Activated naive CD4-positive, alpha-beta T cell treated with anti-CD3 and anti-CD28 coated beads for 36 hours (primary cell): ENCODE measurements at regions of chrX and their contacts with region 1.

Region 1: GRCh38 chrX:103918581-103919269 is 43.7 kb upstream of the TMSB15B start:
- DNase-seq: peak; percentile 73
- H3K4me3 Mint-ChIP-seq: peak overlapping the region; percentile 86
- H3K27ac Mint-ChIP-seq: peak overlapping the region; percentile 90
- H3K4me1 Mint-ChIP-seq: peaks cover 12% of the 10 kb centered on the region
- H3K27me3 Mint-ChIP-seq: no peaks in the 10 kb centered on the region

Region 2: GRCh38 chrX:103629318-103630170 is 289.2 kb before region 1 on chrX:
- CTCF ChIA-PET with region 1: no interaction called
- intact Hi-C with region 1: loop called (anchors 2 kb)
- DNase-seq: peak; percentile 33
- H3K4me3 Mint-ChIP-seq: peak overlapping the region; percentile 87
- H3K27ac Mint-ChIP-seq: peak overlapping the region; percentile 87
- H3K4me1 Mint-ChIP-seq: peaks cover 19% of the 10 kb centered on the region
- H3K27me3 Mint-ChIP-seq: no peaks in the 10 kb centered on the region

Region 3: DNA sequence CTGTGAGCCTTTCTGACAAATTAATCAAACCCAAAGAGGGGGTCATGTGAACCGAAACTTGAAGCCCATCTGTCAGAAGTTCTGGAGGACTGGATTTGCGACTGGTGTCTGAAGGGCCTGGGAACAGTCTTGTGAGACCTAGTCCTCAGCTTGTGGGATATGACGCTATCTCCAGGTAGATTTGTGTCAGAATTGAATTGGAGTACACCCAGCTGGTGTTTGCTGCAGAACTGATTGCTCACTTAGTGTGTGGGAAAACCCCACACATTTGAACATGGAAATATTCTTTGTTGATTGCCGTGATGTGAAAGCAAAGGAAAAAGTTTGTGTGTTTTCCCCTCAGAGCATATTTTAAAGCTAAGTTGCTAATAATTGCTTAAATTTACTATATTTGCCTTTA is 13.4 kb after region 1 on chrX:
- CTCF ChIA-PET with region 1: interaction called, 15 read pairs
- intact Hi-C with region 1: loop called (anchors 1 kb)
- DNase-seq: peak; percentile 9
- H3K4me3 Mint-ChIP-seq: no peak overlapping the region
- H3K27ac Mint-ChIP-seq: no peak overlapping the region
- H3K4me1 Mint-ChIP-seq: peaks cover 8% of the 10 kb centered on the region
- H3K27me3 Mint-ChIP-seq: no peaks in the 10 kb centered on the region

Region 4: DNA sequence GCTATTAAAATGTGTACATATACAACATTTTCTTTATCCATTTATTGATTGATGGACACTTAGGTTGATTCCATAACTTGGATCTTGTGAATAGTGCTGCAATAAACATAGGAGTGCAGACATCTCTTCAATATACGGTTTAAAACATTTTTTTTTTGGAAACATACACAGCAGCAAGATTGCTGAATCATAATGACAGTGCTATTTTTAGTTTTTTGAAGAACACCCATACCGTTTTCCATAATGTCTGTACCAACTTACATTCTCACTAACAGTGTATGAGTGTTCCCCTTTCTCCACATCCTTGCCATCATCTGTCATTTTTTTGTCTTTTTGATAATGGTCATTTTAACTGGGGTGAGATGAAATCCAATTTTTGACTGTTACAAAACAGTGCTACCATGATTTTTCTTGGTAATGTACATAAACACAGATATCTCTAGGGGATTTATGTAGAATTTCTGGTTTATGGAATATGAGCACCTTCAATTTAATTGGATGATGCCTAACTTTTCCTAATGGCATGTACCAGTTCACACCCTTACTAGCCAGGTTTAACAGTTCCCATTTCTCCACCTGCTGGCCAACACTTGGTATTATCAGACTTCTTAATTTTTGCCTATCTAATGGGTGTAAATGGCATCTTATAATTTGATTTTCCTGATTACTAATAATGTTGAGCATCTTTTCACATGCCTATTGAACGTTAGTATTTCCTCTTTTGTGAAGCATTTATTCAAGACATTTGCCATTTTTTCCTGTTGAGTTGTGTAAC is 22.7 kb after region 1 on chrX:
- CTCF ChIA-PET with region 1: interaction called, 8 read pairs
- intact Hi-C with region 1: loop called (anchors 1 kb)
- DNase-seq: peak; percentile 5
- H3K4me3 Mint-ChIP-seq: no peak overlapping the region
- H3K27ac Mint-ChIP-seq: no peak overlapping the region
- H3K4me1 Mint-ChIP-seq: peaks cover 34% of the 10 kb centered on the region
- H3K27me3 Mint-ChIP-seq: no peaks in the 10 kb centered on the region

Region 5: GRCh38 chrX:104113222-104113965 is 194.7 kb after region 1 on chrX:
- CTCF ChIA-PET with region 1: no interaction called
- intact Hi-C with region 1: loop called (anchors 5 kb)
- DNase-seq: peak; percentile 62
- H3K4me3 Mint-ChIP-seq: peak overlapping the region; percentile 74
- H3K27ac Mint-ChIP-seq: no peak overlapping the region
- H3K4me1 Mint-ChIP-seq: peaks cover 33% of the 10 kb centered on the region
- H3K27me3 Mint-ChIP-seq: no peaks in the 10 kb centered on the region

Region 6: DNA sequence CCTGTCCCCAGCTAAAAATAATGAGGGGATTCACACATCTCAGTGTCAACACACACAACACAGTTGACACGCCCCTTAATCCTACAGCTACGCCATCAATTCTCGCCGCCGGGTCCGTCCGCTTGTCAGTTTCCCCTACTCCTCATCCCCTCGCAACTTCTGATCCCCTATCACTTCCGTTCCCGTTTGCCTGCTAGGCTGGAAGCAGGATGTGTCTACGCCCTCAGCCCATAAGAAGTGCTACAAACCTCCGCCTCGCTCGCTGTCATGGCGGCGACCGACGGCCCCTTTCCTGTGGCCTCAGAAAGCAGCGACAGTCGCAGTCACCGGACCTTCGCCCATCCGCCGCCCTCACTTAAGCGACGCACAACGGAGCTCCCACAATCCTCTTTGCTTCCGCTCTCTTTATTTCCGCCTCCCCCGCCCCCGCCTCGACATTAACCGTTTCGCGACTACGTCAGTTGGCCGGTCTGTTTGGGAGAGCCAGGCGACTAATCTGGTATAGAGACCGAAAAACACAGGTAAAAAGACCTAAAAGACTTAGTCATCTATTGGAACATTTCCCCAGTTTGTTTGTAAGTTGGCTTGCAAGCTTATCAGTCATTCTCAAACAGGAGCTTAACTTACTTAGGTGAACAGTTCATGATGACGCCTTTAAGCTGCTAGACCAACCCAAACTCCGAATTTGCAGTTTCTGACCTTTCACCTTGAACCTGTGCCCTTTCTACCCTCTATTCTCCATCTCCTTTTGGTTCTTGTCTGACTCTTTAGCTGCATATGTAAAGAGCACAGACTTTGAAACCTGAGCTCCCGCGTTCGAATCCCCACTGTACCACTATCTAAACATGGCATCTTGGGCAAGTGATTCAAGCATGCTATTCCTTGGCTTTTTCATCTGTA is 238.2 kb after region 1 on chrX and contains the start of gene SLC25A53:
- CTCF ChIA-PET with region 1: interaction called, 5 read pairs
- intact Hi-C with region 1: loop called (anchors 2 kb)
- DNase-seq: peak; percentile 85
- H3K4me3 Mint-ChIP-seq: peak within 1 kb of the TSS; percentile 92
- H3K27ac Mint-ChIP-seq: peak within 1 kb of the TSS; percentile 98
- H3K4me1 Mint-ChIP-seq: peaks cover 9% of the 10 kb centered on the region
- H3K27me3 Mint-ChIP-seq: no peaks in the 10 kb centered on the region
- total RNA-seq, gene SLC25A53: 4.6 to 5.0 TPM